ENCODE measurements at regions of chr2 and their contacts with region 1.

Region 1: GRCh38 chr2:205675861-205676516 is 6.3 kb upstream of the NRP2 start:
- DNase-seq: no peak
- ATAC-seq: peak in 3 of 4 donors; percentile 82 to 85 (median 83)
- H3K4me3 ChIP-seq: no peak overlapping the region
- H3K27ac ChIP-seq: no peak overlapping the region
- H3K4me1 ChIP-seq: no peaks in the 10 kb centered on the region
- H3K27me3 ChIP-seq: no peaks in the 10 kb centered on the region
- CTCF ChIP-seq: peak in 3 of 4 donors; percentile 57 to 68 (median 60)

Region 2: GRCh38 chr2:205237524-205237923 is 438.5 kb before region 1 on chr2:
- intact Hi-C with region 1: loop called in 1 of 3 experiments (anchors 10 kb)
- DNase-seq: no peak
- ATAC-seq: no peak
- H3K4me3 ChIP-seq: no peak overlapping the region
- H3K27ac ChIP-seq: no peak overlapping the region
- H3K4me1 ChIP-seq: no peaks in the 10 kb centered on the region
- H3K27me3 ChIP-seq: no peaks in the 10 kb centered on the region
- CTCF ChIP-seq: no peak